Right cardiac atrium (tissue), 5 donors: ENCODE measurements at regions of chr4 and their contacts with region 1.

Region 1: GRCh38 chr4:165464813-165465381 is 86.1 kb downstream of the CPE start:
- DNase-seq: no peak
- ATAC-seq: peak; percentile 68 to 72
- H3K4me3 ChIP-seq: no peak overlapping the region
- H3K27ac ChIP-seq: no peak overlapping the region
- H3K4me1 ChIP-seq: no peaks in the 10 kb centered on the region
- H3K27me3 ChIP-seq: no peaks in the 10 kb centered on the region

Region 2: DNA sequence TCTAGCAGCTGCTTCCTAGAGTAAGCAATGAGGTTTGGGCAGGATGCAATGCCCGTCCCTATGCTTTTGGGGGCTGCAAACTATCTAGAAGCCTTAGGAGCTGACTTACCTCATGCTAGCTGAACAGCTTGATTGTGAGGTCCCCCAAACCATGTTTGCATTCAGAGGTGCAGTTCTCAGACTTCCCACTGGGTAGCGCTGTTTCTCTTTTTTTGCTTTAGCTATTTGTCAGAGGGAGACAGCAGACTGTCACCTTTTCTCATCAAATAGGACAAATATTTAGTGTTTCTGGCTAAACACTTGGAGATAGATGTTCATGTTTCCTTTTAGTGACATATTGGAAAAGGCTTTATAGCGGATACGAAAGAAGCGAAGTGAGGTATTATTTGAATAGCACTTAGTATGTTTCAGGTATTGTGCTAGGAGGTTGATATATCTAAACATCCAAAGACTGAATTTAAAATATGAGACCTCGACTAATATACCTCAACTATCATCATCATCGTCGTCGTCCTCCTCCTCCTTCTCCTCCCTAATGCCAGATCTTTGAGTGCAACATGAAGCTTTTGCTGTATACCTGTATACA is 333.6 kb before region 1 on chr4:
- intact Hi-C with region 1: loop called (anchors 5 kb)
- DNase-seq: peak in 2 of 3 donors; percentile 28 to 58
- ATAC-seq: peak; percentile 67 to 82
- H3K4me3 ChIP-seq: no peak overlapping the region
- H3K27ac ChIP-seq: no peak overlapping the region
- H3K4me1 ChIP-seq: peaks cover 1% of the 10 kb centered on the region
- H3K27me3 ChIP-seq: no peaks in the 10 kb centered on the region

Region 3: GRCh38 chr4:165355900-165356300 is 109.0 kb before region 1 on chr4:
- intact Hi-C with region 1: loop called (anchors 5 to 10 kb)
- DNase-seq: peak in 1 of 3 donors; percentile 54
- ATAC-seq: peak; percentile 45 to 62
- H3K4me3 ChIP-seq: no peak overlapping the region
- H3K27ac ChIP-seq: no peak overlapping the region
- H3K4me1 ChIP-seq: no peaks in the 10 kb centered on the region
- H3K27me3 ChIP-seq: no peaks in the 10 kb centered on the region